Activated CD8-positive, alpha-beta T cell treated with anti-CD3 and anti-CD28 coated beads, Interleukin-2, amount 10 ng/mL, durations not matched to agents 7 days and 5 days (primary cell): ENCODE measurements at regions of chr3 and their contacts with region 1.

Region 1: DNA sequence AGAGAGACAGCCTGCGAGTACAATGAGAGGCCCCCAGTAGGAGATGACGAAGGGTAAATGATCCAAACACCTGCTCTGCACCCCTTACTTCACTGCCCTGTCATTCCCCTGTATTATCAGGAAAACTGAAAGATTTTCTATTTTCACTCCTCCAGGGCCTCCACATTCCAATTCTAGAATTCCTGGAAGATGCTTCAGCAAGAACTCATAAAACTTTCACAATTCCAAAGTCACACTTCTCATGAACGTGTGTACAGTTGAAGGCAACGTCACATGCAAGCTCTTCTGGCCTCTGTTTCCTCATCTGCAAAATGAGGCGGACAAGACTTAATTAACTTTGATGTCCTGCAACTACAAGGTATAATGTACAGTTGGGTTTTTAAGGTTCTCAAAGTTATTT is 62.8 kb upstream of the SPATA12 start:
- DNase-seq: no peak
- ATAC-seq: no peak
- H3K4me3 Mint-ChIP-seq: no peak overlapping the region
- H3K27ac Mint-ChIP-seq: no peak overlapping the region
- H3K4me1 Mint-ChIP-seq: peaks cover 3% of the 10 kb centered on the region
- H3K27me3 Mint-ChIP-seq: peaks cover 11% of the 10 kb centered on the region

Region 2: GRCh38 chr3:56693750-56694149 is 303.9 kb before region 1 on chr3:
- CTCF ChIA-PET with region 1: interaction called, 13 read pairs
- POLR2A ChIA-PET with region 1: no interaction called
- DNase-seq: no peak
- ATAC-seq: peak; percentile 23
- H3K4me3 Mint-ChIP-seq: peak overlapping the region; percentile 80
- H3K27ac Mint-ChIP-seq: peak overlapping the region; percentile 94
- H3K4me1 Mint-ChIP-seq: peaks cover 47% of the 10 kb centered on the region
- H3K27me3 Mint-ChIP-seq: no peaks in the 10 kb centered on the region

Region 3: DNA sequence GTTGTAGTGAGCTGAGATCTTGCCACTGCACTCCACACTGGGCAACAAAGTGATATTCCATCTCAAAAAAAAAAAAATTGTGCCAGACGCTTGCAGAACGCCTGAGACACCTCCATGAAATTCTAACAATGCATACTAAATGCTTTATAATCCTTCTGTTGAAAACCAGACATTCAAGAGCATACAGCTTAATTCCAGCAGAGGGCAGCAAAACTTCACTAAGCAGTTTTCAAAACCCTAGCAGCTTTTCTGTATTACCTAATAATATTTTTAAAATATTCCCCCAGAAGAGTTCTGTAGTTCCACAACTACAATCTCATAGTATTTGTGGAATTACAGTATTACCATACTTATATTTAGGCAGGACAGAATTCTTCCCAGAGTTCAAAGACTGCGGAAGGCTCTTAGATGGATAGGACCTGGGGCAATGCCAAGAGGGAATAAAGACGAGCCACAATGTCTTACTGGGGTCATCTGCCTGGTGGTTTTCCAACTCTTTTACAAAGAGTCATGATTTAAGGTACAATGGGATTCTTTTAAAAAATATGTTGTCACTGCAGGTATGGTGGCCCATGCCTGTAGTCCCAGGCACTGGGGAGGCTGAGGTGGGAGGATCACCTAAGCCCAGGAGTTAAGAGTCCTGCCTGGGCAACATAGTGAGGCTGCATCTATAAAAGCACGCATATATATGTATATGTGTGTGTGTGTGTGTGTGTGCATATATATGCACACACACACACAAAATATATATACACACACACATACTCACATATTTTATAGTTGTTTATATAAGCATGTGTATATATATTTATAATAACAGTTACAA is 295.0 kb before region 1 on chr3:
- CTCF ChIA-PET with region 1: interaction called, 13 read pairs
- POLR2A ChIA-PET with region 1: no interaction called
- DNase-seq: peak; percentile 74
- ATAC-seq: peak; percentile 73
- H3K4me3 Mint-ChIP-seq: no peak overlapping the region
- H3K27ac Mint-ChIP-seq: no peak overlapping the region
- H3K4me1 Mint-ChIP-seq: peaks cover 34% of the 10 kb centered on the region
- H3K27me3 Mint-ChIP-seq: no peaks in the 10 kb centered on the region

Region 4: DNA sequence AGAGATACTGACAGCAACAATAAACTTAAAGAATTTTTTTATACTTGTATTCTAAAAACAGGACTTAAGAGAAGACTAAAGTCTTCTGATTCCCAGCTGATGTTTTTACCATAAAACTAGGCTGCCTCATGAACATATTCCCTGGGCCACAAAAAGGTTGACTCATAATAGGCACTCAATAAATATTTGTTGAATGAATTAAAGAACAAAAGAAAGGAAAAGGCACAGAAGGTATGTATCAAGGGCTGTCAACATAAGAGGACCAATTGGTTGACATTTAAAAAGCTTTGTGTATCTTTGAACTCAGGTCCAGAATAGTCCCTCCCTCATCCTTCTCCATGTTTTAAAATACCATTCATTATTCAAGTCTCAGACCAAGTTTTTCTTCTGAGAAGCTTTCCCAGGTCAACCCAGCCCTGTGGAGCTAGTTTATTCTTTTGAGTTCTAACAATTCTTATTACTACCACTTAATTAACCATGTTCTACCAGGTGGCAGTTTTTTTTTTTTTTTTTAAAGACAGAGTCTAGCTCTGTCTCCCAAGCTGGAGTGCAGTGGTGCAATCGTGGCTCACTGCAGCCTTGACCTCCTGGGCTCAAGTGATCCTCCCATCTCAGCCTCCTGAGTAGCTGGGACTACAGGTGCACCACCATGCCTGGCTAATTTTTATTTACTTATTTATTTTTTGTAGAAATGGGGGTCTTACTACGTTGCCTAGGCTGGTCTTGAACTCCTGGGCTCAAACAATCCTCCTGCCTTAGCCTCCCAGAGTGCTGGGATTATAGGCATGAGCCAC is 178.5 kb before region 1 on chr3:
- CTCF ChIA-PET with region 1: interaction called, 12 read pairs
- POLR2A ChIA-PET with region 1: no interaction called
- DNase-seq: no peak
- ATAC-seq: no peak
- H3K4me3 Mint-ChIP-seq: no peak overlapping the region
- H3K27ac Mint-ChIP-seq: no peak overlapping the region
- H3K4me1 Mint-ChIP-seq: peaks cover 39% of the 10 kb centered on the region
- H3K27me3 Mint-ChIP-seq: no peaks in the 10 kb centered on the region

Region 5: DNA sequence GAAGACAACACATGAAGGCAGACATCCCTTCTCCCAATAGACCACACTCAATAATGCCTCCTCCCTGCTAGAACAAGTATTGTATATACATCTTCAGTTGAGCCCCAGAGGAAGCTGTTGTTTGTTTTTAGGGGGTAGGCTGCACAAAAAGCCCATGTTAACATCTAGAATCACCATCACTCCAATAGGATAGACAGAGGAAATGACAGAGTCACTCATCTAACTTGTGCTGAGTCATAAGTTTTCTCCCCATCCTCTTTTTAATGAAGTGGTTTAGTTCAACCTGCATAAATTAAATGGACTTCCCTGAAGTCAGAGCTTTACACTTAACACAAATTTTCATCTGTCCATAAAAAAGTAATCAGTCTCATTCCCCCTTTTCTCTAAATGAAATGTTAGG is 60.1 kb before region 1 on chr3:
- CTCF ChIA-PET with region 1: no interaction called
- POLR2A ChIA-PET with region 1: no interaction called
- DNase-seq: no peak
- ATAC-seq: no peak
- H3K4me3 Mint-ChIP-seq: no peak overlapping the region
- H3K27ac Mint-ChIP-seq: no peak overlapping the region
- H3K4me1 Mint-ChIP-seq: peaks cover 13% of the 10 kb centered on the region
- H3K27me3 Mint-ChIP-seq: no peaks in the 10 kb centered on the region

Region 6: DNA sequence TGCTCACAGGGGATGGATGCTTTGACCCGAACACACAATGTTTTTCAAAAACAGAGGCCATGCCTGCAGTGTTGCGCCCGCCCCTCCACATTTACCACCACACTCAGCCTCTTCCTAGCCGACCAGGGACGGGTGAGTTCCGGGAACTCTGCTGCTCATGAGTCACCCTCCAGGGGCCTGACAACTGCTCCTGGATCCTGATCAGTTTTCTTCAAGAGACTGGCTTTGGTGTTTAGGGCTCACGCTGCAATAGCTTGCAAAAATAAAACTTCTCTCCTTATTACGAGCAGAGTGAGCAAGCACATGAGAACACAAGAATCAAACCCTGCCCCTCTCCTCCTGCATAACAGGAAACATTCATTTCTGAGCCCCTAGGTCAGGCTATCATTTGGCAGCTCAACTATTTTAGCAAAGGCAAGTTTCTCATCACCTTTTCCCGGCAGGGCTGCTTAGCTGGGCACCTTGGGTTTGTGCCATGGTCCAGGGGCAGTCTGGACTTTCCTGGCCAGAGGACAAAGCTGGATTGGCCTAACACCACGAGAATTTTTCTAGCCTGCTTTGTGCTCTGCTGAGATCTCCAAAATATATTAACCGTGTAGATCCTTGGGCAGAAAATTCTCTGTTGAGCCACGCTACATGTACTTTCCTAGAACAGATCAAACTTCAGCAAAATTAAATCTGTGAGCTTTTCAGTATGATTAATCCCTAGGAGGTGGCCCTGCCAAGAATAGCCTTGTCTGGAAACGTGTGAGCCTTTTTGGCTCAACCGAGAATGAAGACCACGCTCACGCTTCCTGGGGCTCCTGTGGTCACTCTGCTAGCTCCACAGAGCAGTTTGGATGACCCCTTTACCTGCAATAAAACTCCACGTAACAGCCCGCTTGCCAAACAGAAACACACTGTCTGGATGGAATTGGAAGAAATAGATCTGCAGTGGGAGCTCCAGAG is 10.1 kb after region 1 on chr3:
- CTCF ChIA-PET with region 1: interaction called, 23 read pairs
- POLR2A ChIA-PET with region 1: no interaction called
- DNase-seq: peak; percentile 39
- ATAC-seq: peak; percentile 89
- H3K4me3 Mint-ChIP-seq: peak overlapping the region; percentile 6
- H3K27ac Mint-ChIP-seq: peak overlapping the region; percentile 77
- H3K4me1 Mint-ChIP-seq: peaks cover 14% of the 10 kb centered on the region
- H3K27me3 Mint-ChIP-seq: peaks cover 2% of the 10 kb centered on the region

Region 7: DNA sequence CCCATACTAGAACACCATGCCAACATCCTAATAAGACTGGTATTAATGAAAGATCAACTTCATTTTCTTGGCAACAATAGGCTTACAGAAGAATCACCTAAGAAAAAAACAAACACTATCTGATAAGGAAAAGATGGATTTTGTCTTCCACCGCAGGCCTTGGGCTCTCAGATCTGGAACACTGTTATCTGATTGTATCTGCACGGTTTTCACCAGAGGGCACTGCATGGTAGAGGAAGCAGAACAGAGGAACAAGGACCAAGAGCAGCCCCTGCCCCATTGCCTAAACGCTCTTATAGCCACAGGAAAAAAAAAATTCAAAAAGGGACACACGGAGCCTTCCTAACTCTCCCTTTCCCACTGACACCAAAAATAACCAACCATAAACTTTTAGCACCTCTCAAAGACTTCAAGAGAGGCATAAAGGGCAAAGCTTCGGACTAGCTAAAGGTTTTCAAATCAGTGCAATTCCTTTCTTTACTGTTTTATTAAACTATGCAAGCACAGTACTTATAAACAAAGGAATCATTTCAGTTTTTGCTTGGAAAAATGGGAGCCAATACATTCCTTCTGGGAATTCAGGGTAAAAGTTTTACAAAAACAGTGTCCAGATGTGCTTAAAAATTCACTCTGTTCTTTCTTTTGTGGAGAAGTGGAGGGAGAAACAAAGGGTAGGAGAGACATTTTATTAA is 144.2 kb after region 1 on chr3:
- CTCF ChIA-PET with region 1: no interaction called
- POLR2A ChIA-PET with region 1: no interaction called
- DNase-seq: no peak
- ATAC-seq: no peak
- H3K4me3 Mint-ChIP-seq: no peak overlapping the region
- H3K27ac Mint-ChIP-seq: no peak overlapping the region
- H3K4me1 Mint-ChIP-seq: no peaks in the 10 kb centered on the region
- H3K27me3 Mint-ChIP-seq: peaks cover 39% of the 10 kb centered on the region